Activated CD4-positive, alpha-beta T cell treated with anti-CD3 and anti-CD28 coated beads for 36 hours (primary cell): ENCODE measurements at regions of chr17 and their contacts with region 1.

Region 1: DNA sequence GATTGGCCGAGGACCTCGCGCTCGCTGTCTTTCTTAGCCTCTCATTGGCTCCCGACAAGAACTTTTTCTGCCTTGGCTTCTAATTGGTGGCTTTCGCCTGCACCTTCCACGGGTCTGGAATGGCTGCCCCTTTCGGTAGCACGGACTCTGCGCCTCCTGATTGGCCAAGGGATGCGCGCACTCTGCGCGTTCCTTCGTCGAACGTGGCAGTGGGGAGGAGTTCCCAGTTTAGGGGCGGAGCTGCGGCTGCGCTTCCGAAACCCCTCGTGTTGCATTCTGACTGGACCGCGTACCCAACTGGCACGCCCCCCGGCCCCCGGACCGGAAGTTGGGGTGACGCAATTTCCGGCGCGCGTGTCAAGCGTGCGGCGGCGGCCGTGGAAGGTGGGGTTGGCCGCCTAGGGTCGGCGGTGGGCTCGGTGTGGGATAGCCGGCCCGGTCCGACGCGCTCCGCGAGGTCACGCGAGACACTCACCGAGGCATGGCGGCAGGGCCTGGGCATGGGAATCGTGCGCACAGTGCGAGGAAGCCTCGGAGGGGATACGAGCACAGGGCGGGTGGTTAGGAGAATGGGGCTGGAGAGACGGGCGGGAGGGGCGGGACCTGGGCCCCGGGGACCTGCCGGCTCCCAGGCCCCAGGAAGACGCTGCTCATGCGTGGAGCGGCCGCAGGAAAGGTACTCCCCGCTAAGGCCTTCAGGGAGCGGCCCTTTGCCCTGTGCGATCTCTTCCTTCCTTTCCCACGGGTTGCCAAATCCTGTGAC is 602 bp upstream of the P4HB start:
- DNase-seq: peak; percentile 99
- ATAC-seq: peak; percentile 91
- H3K4me3 Mint-ChIP-seq: peak overlapping the region; percentile 99
- H3K27ac Mint-ChIP-seq: peak overlapping the region; percentile 98
- H3K4me1 Mint-ChIP-seq: peaks cover 50% of the 10 kb centered on the region
- H3K27me3 Mint-ChIP-seq: no peaks in the 10 kb centered on the region

Region 2: GRCh38 chr17:81238817-81239600 is 621.9 kb before region 1 on chr17 and contains the starts of genes NDUFAF8 and TEPSIN:
- CTCF ChIA-PET with region 1: no interaction called
- POLR2A ChIA-PET with region 1: no interaction called
- intact Hi-C with region 1: loop called in 1 of 2 experiments (anchors 2 kb)
- DNase-seq: peak; percentile 97
- ATAC-seq: peak; percentile 99
- H3K4me3 Mint-ChIP-seq: peak within 1 kb of the TSS; percentile 93
- H3K27ac Mint-ChIP-seq: peak within 1 kb of the TSS; percentile 96
- H3K4me1 Mint-ChIP-seq: peaks cover 25% of the 10 kb centered on the region
- H3K27me3 Mint-ChIP-seq: no peaks in the 10 kb centered on the region
- total RNA-seq, gene NDUFAF8: 31.0 to 57.9 TPM
- total RNA-seq, gene TEPSIN: 17.8 to 20.3 TPM

Region 3: GRCh38 chr17:81666342-81667191 is 194.4 kb before region 1 on chr17 and contains the starts of genes CCDC137 and OXLD1:
- CTCF ChIA-PET with region 1: no interaction called
- POLR2A ChIA-PET with region 1: no interaction called
- intact Hi-C with region 1: loop called (anchors 1 to 2 kb)
- DNase-seq: peak; percentile 97
- ATAC-seq: peak; percentile 91
- H3K4me3 Mint-ChIP-seq: peak within 1 kb of the TSS; percentile 91
- H3K27ac Mint-ChIP-seq: peak within 1 kb of the TSS; percentile 97
- H3K4me1 Mint-ChIP-seq: peaks cover 53% of the 10 kb centered on the region
- H3K27me3 Mint-ChIP-seq: no peaks in the 10 kb centered on the region
- total RNA-seq, gene CCDC137: 30.0 to 36.6 TPM
- total RNA-seq, gene OXLD1: 29.4 to 45.3 TPM

Region 4: GRCh38 chr17:81733507-81734404 is 127.2 kb before region 1 on chr17:
- CTCF ChIA-PET with region 1: interaction called, 3 read pairs
- POLR2A ChIA-PET with region 1: no interaction called
- intact Hi-C with region 1: loop called in 1 of 2 experiments (anchors 1 kb)
- DNase-seq: peak; percentile 87
- ATAC-seq: peak; percentile 96
- H3K4me3 Mint-ChIP-seq: no peak overlapping the region
- H3K27ac Mint-ChIP-seq: no peak overlapping the region
- H3K4me1 Mint-ChIP-seq: peaks cover 7% of the 10 kb centered on the region
- H3K27me3 Mint-ChIP-seq: peaks cover 16% of the 10 kb centered on the region

Region 5: DNA sequence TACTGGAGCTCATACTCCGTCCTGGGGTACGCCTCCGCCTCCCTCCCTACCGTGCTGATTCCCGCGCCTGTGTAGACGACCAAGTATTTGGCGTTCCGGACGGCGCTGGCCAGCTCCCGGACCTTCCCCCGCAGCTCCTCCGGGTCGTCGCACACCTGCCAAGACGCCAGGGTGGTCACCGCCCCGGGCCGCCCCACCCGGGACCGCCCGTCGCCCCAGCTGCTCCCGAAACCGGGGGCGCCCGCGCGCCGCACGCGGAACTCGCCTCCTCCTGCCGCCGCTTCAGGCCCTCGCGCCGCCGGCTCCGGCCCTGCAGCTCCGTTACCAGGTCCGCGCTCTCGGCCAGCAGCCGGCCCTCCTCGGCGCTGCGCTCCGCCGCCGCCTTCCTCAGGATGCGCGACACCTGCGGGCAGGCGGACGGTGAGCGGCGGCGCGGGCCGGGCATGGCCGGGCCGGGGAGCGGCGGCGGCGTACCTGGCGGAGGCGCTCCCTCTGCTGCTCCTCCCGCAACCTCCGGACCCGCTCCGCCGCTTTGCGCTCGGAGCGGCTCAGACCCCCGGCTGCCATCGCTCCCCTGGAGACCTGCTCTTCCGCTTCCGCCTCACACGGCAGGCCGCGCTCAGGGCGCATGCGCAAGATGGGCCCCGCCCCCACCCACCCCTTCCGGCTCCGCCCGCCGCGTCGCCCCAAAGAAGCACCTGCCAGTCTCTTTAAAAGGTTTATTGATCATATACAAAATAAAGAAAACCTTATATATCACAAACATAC is 56.8 kb after region 1 on chr17 and contains the start of gene SIRT7:
- CTCF ChIA-PET with region 1: no interaction called
- POLR2A ChIA-PET with region 1: no interaction called
- intact Hi-C with region 1: loop called in 1 of 2 experiments (anchors 2 kb)
- DNase-seq: peak; percentile 90
- ATAC-seq: peak; percentile 87
- H3K4me3 Mint-ChIP-seq: peak within 1 kb of the TSS; percentile 85
- H3K27ac Mint-ChIP-seq: peak within 1 kb of the TSS; percentile 82
- H3K4me1 Mint-ChIP-seq: peaks cover 23% of the 10 kb centered on the region
- H3K27me3 Mint-ChIP-seq: no peaks in the 10 kb centered on the region
- total RNA-seq, gene SIRT7: 29.3 to 31.8 TPM

Region 6: GRCh38 chr17:82022981-82023374 is 162.0 kb after region 1 on chr17 and contains the start of gene LRRC45:
- CTCF ChIA-PET with region 1: no interaction called
- POLR2A ChIA-PET with region 1: no interaction called
- intact Hi-C with region 1: loop called in 1 of 2 experiments (anchors 1 kb)
- DNase-seq: peak; percentile 100
- ATAC-seq: peak; percentile 97
- H3K4me3 Mint-ChIP-seq: peak within 1 kb of the TSS; percentile 84
- H3K27ac Mint-ChIP-seq: peak within 1 kb of the TSS; percentile 76
- H3K4me1 Mint-ChIP-seq: peaks cover 14% of the 10 kb centered on the region
- H3K27me3 Mint-ChIP-seq: no peaks in the 10 kb centered on the region
- total RNA-seq, gene LRRC45: 17.6 to 20.6 TPM